ENCODE measurements at regions of chr4 and their contacts with region 1.

Region 1: GRCh38 chr4:5812506-5813229 is 80.2 kb downstream of the CRMP1 start:
- H3K4me3 Mint-ChIP-seq: no peak overlapping the region
- H3K27ac Mint-ChIP-seq: no peak overlapping the region
- H3K4me1 Mint-ChIP-seq: no peaks in the 10 kb centered on the region
- H3K27me3 Mint-ChIP-seq: no peaks in the 10 kb centered on the region

Region 2: GRCh38 chr4:4488405-4489404 is 1324.0 kb before region 1 on chr4:
- intact Hi-C with region 1: loop called (anchors 5 kb)
- H3K4me3 Mint-ChIP-seq: no peak overlapping the region
- H3K27ac Mint-ChIP-seq: no peak overlapping the region
- H3K4me1 Mint-ChIP-seq: peaks cover 5% of the 10 kb centered on the region
- H3K27me3 Mint-ChIP-seq: no peaks in the 10 kb centered on the region

Region 3: GRCh38 chr4:4995103-4995907 is 817.4 kb before region 1 on chr4:
- intact Hi-C with region 1: loop called (anchors 1 kb)
- H3K4me3 Mint-ChIP-seq: no peak overlapping the region
- H3K27ac Mint-ChIP-seq: no peak overlapping the region
- H3K4me1 Mint-ChIP-seq: peaks cover 5% of the 10 kb centered on the region
- H3K27me3 Mint-ChIP-seq: peaks cover 4% of the 10 kb centered on the region

Region 4: DNA sequence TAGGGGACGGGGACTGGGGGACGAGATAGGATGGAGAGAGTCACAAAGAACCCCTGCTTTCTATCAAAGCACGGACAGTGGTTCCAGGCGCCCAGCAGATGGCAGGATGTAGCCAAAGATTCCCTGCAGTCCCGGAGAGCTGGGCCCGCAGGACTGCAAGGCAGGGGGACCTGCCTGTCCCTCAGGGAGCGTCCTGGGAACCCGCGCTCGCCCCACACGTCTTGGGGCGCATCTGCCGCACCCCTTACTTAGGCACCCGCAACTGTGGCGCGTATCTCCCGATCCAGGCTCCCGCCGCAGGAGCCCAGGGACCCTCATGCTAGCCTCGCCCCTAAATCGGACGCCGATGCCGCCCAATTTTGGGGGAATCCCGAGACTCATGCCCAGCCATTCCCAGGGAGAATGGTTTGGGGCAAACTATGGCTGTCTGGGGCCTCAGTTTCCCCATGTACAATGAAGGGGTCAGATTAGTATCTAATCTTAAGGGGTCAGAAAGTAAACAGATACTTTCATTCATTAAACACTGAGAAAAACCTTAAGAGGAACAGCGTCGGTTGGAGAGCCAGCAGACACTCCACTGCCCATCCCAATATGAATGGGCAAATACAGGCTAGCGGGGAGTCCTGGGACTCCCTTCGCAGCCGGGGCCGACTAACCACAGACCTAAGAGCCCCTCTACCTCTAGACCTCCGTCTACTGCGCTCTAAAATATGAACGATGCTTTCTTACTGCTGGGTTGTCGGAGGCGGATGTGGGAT is 762.0 kb before region 1 on chr4:
- intact Hi-C with region 1: loop called (anchors 2 kb)
- H3K4me3 Mint-ChIP-seq: peak overlapping the region; percentile 85
- H3K27ac Mint-ChIP-seq: peak overlapping the region; percentile 80
- H3K4me1 Mint-ChIP-seq: peaks cover 37% of the 10 kb centered on the region
- H3K27me3 Mint-ChIP-seq: peaks cover 20% of the 10 kb centered on the region

Region 5: GRCh38 chr4:5845035-5845905 is 32.6 kb after region 1 on chr4:
- intact Hi-C with region 1: no loop called
- H3K4me3 Mint-ChIP-seq: no peak overlapping the region
- H3K27ac Mint-ChIP-seq: no peak overlapping the region
- H3K4me1 Mint-ChIP-seq: no peaks in the 10 kb centered on the region
- H3K27me3 Mint-ChIP-seq: peaks cover 1% of the 10 kb centered on the region